Adrenal gland (tissue), 19 donors: ENCODE measurements at regions of chr2 and their contacts with region 1.

Region 1: DNA sequence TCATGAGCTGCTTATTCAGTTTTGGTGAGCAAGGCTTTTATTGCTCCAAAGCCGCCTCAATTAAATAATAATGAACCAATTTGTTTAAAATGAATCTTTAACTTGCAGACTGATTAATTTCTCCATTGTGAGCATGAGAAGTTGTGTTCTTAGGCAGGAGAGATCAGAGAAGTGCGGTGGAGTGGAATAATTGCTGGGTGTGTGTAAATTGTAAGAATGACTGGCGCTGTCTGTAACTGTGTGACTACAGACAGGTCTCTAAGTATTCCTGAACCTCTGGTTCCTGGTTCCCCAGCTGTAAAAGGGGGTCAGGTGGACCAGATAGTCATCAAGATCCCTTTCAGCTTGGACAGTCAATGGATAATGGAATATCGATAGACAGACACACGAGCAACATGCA is 98.0 kb upstream of the EFEMP1 start:
- DNase-seq: no peak
- H3K4me3 ChIP-seq: no peak overlapping the region
- H3K27ac ChIP-seq: no peak overlapping the region
- H3K4me1 ChIP-seq: no peaks in the 10 kb centered on the region
- H3K27me3 ChIP-seq: no peaks in the 10 kb centered on the region
- CTCF ChIP-seq: no peak
- POLR2A ChIP-seq: no peak

Region 2: GRCh38 chr2:55761526-55761925 is 260.1 kb before region 1 on chr2:
- intact Hi-C with region 1: loop called in 1 of 2 experiments (anchors 10 kb)
- DNase-seq: no peak
- H3K4me3 ChIP-seq: no peak overlapping the region
- H3K27ac ChIP-seq: peak overlapping the region in 1 of 5 donors; percentile 29
- H3K4me1 ChIP-seq: no peaks in the 10 kb centered on the region
- H3K27me3 ChIP-seq: peaks cover 4% of the 10 kb centered on the region
- CTCF ChIP-seq: no peak
- POLR2A ChIP-seq: no peak

Region 3: GRCh38 chr2:55934337-55934736 is 87.2 kb before region 1 on chr2:
- intact Hi-C with region 1: no loop called
- DNase-seq: no peak
- H3K4me3 ChIP-seq: no peak overlapping the region
- H3K27ac ChIP-seq: no peak overlapping the region
- H3K4me1 ChIP-seq: peaks cover 0 to 7% of the 10 kb centered on the region in 2 donors
- H3K27me3 ChIP-seq: peaks cover 18% of the 10 kb centered on the region
- CTCF ChIP-seq: no peak
- POLR2A ChIP-seq: no peak